Activated CD4-positive, alpha-beta T cell treated with anti-CD3 and anti-CD28 coated beads for 36 hours (primary cell): ENCODE measurements at regions of chr14 and their contacts with region 1.

Region 1: GRCh38 chr14:93804646-93805045 is 16.4 kb upstream of the PRIMA1 start:
- DNase-seq: peak; percentile 35
- ATAC-seq: no peak
- H3K4me3 Mint-ChIP-seq: no peak overlapping the region
- H3K27ac Mint-ChIP-seq: no peak overlapping the region
- H3K4me1 Mint-ChIP-seq: peaks cover 10% of the 10 kb centered on the region
- H3K27me3 Mint-ChIP-seq: peaks cover 6% of the 10 kb centered on the region

Region 2: DNA sequence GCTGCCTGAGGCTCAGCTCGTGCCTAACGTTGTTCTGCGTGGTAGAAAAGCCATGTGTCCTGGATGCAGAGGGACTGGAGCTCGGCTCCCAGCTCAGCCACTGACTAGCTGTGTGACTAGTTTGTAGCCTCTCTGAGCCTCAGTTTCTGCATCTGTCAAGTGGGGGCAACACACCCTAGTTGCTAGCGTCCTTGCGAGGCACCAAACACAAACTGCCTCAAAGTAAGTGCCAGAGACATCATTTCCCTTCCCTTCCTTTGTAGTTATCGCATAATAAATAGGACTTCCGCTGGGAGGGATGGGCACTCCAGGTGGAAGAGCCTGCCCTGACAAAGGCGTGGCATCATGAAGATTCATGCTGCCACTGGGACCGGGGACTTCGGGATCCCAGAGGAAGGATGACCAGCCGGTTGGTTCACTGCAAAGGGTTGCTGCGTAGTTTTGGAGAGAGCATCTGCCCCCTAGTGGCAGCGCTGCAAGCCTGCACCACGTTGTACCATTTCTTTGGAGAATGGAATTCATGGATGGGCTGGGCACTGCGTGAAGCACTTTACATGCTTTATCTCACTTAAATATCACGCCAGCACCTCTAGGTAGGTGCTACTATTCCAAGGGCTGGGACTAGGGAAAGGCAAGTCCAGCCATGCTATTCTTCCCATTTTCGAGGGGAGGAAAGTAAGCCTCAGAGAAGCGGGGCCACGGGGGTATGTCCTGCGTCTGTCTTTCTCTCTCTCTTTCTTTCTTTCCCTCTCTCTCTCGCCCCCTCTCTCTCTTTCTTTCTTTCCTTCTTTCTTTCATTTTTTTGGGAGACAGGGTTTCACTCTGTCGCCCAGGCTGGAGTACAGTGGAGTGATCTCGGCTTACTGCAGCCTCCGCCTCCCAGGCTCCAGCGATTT is 197.1 kb after region 1 on chr14:
- CTCF ChIA-PET with region 1: no interaction called
- POLR2A ChIA-PET with region 1: no interaction called
- intact Hi-C with region 1: loop called in 1 of 2 experiments (anchors 10 kb)
- DNase-seq: peak; percentile 78
- ATAC-seq: peak; percentile 84
- H3K4me3 Mint-ChIP-seq: no peak overlapping the region
- H3K27ac Mint-ChIP-seq: peak overlapping the region; percentile 77
- H3K4me1 Mint-ChIP-seq: peaks cover 24% of the 10 kb centered on the region
- H3K27me3 Mint-ChIP-seq: peaks cover 5% of the 10 kb centered on the region